ENCODE measurements at regions of chr12 and their contacts with region 1.

Region 1: GRCh38 chr12:27703710-27704452 is 6.8 kb upstream of the MRPS35 start:
- DNase-seq: peak; percentile 88
- H3K4me3 Mint-ChIP-seq: no peak overlapping the region
- H3K27ac Mint-ChIP-seq: peak overlapping the region; percentile 51
- H3K4me1 Mint-ChIP-seq: peaks cover 6% of the 10 kb centered on the region
- H3K27me3 Mint-ChIP-seq: no peaks in the 10 kb centered on the region
- CTCF ChIP-seq: peak; percentile 88

Region 2: DNA sequence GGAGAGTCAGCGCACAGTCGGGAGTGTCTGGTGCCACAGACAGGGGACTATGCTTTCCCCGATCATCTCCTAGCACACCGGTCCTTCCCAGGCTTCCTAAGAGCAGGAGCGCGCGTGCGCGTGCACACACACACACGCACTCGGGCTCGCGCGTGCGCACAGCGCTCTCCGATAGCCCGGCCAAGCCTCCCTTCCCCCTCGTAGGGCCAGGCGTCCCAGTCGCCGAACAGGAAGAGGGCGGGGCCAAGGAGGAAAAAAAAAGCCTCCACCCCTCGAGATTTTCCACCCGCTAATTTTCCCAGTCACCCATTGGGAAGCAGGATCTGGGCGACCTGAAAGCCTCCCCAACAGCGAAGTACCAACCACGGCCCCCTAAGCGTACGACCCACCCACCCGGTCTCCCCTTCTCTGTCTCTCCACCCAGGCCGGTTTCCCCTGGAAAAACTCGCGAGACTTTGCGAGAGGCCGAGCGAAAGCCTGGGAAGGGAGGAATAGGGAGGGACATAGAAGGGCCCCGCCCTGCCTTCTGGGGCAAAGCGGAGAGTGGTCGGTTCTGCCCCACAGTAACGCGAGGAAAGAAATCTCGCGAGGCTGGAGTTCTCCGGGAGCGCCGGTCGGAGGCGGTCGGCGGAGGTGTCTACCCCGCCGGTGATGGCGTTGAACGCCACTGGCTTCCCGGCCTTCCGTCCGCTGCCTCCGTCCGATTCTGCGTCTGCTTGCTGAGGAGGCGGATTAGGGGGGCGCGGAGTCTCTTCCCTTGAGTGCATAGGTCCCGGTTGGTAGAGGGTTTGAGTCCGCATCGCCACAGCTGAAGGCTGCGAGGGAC is 765.8 kb before region 1 on chr12 and contains the starts of genes FGFR1OP2 and INTS13:
- CTCF ChIA-PET with region 1: no interaction called
- POLR2A ChIA-PET with region 1: no interaction called
- intact Hi-C with region 1: loop called (anchors 5 kb)
- DNase-seq: peak; percentile 99
- H3K4me3 Mint-ChIP-seq: peak within 1 kb of the TSS; percentile 91
- H3K27ac Mint-ChIP-seq: peak within 1 kb of the TSS; percentile 97
- H3K4me1 Mint-ChIP-seq: peaks cover 45% of the 10 kb centered on the region
- H3K27me3 Mint-ChIP-seq: no peaks in the 10 kb centered on the region
- CTCF ChIP-seq: no peak
- total RNA-seq, gene FGFR1OP2: 40.6 and 44.6 TPM in 2 replicates
- total RNA-seq, gene INTS13: 64.8 and 67.8 TPM in 2 replicates

Region 3: GRCh38 chr12:27226407-27226929 is 477.4 kb before region 1 on chr12:
- CTCF ChIA-PET with region 1: no interaction called
- POLR2A ChIA-PET with region 1: no interaction called
- intact Hi-C with region 1: no loop called
- DNase-seq: peak; percentile 65
- H3K4me3 Mint-ChIP-seq: no peak overlapping the region
- H3K27ac Mint-ChIP-seq: peak overlapping the region; percentile 89
- H3K4me1 Mint-ChIP-seq: peaks cover 12% of the 10 kb centered on the region
- H3K27me3 Mint-ChIP-seq: no peaks in the 10 kb centered on the region
- CTCF ChIP-seq: no peak

Region 4: GRCh38 chr12:27424631-27425230 is 279.1 kb before region 1 on chr12:
- CTCF ChIA-PET with region 1: interaction called, 4 read pairs
- POLR2A ChIA-PET with region 1: no interaction called
- intact Hi-C with region 1: loop called (anchors 2 kb)
- DNase-seq: peak; percentile 54
- H3K4me3 Mint-ChIP-seq: no peak overlapping the region
- H3K27ac Mint-ChIP-seq: no peak overlapping the region
- H3K4me1 Mint-ChIP-seq: no peaks in the 10 kb centered on the region
- H3K27me3 Mint-ChIP-seq: no peaks in the 10 kb centered on the region
- CTCF ChIP-seq: peak; percentile 45

Region 5: GRCh38 chr12:27689558-27690180 is 14.2 kb before region 1 on chr12:
- CTCF ChIA-PET with region 1: interaction called, 18 read pairs
- POLR2A ChIA-PET with region 1: interaction called, 3 read pairs
- intact Hi-C with region 1: no loop called
- DNase-seq: no peak
- H3K4me3 Mint-ChIP-seq: no peak overlapping the region
- H3K27ac Mint-ChIP-seq: peak overlapping the region; percentile 55
- H3K4me1 Mint-ChIP-seq: no peaks in the 10 kb centered on the region
- H3K27me3 Mint-ChIP-seq: no peaks in the 10 kb centered on the region
- CTCF ChIP-seq: no peak

Measured in MCF 10A (cell line).